ENCODE measurements at regions of chr10 and their contacts with region 1.

Region 1: DNA sequence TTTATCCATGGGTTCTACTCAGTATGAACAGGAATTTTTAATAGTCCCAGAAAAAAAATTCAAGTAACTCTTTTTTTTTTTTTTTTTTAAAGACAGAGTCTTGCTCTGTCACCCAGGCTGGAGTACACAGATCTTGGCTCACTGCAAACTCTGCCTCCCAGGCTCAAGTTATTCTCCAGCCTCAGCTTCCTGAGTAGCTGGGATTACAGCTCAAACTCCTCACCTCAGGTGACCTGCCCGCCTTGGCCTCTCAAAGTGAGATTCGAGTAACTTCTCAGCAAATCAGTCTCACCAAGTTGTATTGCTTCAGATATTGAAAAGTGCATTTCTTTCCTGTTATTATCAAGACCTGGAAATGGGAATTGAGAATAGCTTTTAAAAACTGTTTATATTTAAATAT is 281.2 kb upstream of the MINDY3 start:
- DNase-seq: no peak
- H3K4me3 ChIP-seq: no peak overlapping the region
- H3K27ac ChIP-seq: no peak overlapping the region
- H3K4me1 ChIP-seq: no peaks in the 10 kb centered on the region
- H3K27me3 ChIP-seq: no peaks in the 10 kb centered on the region
- CTCF ChIP-seq: no peak
- POLR2A ChIP-seq: no peak

Region 2: DNA sequence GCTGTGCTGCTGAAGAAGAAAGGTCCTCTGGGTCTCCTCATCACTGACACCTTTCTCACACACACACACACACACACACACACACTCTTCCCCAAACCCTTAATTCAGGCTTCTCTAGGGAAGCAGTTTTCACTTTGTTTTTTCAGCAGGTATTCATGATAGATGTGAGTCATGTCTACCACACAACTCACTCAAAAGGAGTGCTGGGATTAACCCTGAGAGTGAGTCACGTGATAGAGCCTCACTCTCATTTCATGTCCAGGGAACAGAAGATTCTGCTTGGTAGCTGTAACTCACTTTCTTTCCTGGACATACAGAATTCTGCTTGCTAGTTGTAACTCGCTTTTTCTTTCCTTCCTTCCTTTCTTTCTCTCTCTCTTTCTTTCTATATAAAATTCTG is 1131.9 kb after region 1 on chr10:
- intact Hi-C with region 1: loop called in 1 of 2 experiments (anchors 10 kb)
- DNase-seq: no peak
- H3K4me3 ChIP-seq: no peak overlapping the region
- H3K27ac ChIP-seq: no peak overlapping the region
- H3K4me1 ChIP-seq: no peaks in the 10 kb centered on the region
- H3K27me3 ChIP-seq: no peaks in the 10 kb centered on the region
- CTCF ChIP-seq: no peak
- POLR2A ChIP-seq: no peak